Activated CD4-positive, alpha-beta T cell treated with anti-CD3 and anti-CD28 coated beads, Interleukin-2, amount 10 ng/mL, durations not matched to agents 24 days and 14 days (primary cell): ENCODE measurements at regions of chr6 and their contacts with region 1.

Region 1: GRCh38 chr6:16761471-16762267 is 409 bp upstream of the ATXN1 start:
- DNase-seq: peak; percentile 95
- H3K4me3 Mint-ChIP-seq: peak overlapping the region; percentile 99
- H3K27ac Mint-ChIP-seq: peak overlapping the region; percentile 100
- H3K4me1 Mint-ChIP-seq: peaks cover 56% of the 10 kb centered on the region
- H3K27me3 Mint-ChIP-seq: no peaks in the 10 kb centered on the region

Region 2: GRCh38 chr6:16319813-16320532 is 441.7 kb before region 1 on chr6:
- intact Hi-C with region 1: loop called (anchors 2 kb)
- DNase-seq: peak; percentile 90
- H3K4me3 Mint-ChIP-seq: peak overlapping the region; percentile 73
- H3K27ac Mint-ChIP-seq: peak overlapping the region; percentile 84
- H3K4me1 Mint-ChIP-seq: peaks cover 66% of the 10 kb centered on the region
- H3K27me3 Mint-ChIP-seq: no peaks in the 10 kb centered on the region

Region 3: DNA sequence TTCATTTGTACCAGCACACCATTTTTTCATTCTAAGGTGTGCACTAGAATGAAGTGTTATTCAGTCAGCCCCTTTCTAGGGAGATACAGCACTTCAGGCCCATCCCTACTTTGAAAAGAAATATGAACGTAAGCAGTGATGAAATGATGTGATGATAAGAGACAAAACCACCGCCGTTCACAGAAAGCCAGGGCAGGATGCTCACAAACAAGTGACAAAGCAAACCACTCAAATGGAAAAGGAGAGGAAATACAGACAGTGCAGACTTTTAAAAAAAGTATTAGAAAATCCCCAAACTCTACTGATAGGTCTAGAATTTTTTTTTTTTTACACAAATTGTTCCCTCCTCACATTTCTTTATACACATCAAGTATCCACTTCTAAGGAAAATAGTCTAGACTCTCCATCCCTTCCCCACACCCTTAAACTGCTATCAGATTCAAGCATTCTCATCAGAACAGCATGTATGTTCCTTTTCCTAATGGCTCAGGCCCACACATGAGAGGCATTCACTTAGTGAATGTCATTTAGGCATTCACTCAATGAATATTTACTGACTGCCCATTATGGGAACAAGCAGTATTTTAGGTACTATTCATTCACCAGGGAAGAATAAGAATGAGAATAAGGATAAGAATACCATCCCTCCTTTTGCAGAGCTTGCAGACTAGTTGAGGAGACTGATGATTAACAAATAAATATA is 279.8 kb before region 1 on chr6:
- intact Hi-C with region 1: loop called (anchors 1 kb)
- DNase-seq: peak; percentile 92
- H3K4me3 Mint-ChIP-seq: peak overlapping the region; percentile 54
- H3K27ac Mint-ChIP-seq: peak overlapping the region; percentile 99
- H3K4me1 Mint-ChIP-seq: peaks cover 82% of the 10 kb centered on the region
- H3K27me3 Mint-ChIP-seq: no peaks in the 10 kb centered on the region

Region 4: DNA sequence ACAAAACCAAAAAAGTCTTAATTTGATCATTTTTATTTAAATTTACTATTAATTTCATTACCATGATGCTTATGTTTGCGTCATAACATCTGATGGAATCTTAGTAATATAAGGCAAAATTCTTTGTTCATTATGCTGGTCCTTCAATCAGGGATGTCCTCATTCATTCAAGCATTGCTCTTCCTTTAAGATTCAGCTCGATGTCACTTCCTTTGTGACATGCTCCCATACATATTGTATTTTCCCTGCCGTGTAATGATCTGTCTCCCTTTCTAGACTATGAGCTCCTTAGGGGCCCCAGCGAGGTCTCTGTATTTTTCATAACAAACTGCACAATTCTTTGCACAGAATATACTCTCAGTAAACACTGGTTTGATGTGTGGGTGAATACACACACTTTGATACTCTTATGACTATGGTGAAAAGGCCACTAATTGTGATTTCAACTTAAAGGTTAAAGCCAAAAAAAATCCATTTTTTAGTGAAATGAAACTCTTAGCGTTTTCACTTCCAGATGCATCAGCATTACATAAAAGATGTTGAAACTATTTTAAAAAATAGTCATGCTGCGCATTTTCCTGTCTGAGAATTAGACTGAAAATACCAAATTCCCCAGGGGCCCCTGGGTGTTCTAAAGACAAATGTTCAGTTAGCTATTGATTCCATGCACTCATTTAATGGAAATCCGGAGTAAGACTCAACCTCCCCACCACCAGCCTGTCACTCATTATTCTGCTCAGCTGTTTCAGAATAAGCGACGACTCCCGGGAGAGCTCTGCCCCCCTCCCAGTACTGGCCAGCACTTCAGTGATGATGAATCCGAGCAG is 170.1 kb before region 1 on chr6:
- intact Hi-C with region 1: loop called (anchors 1 kb)
- DNase-seq: no peak
- H3K4me3 Mint-ChIP-seq: peak overlapping the region; percentile 16
- H3K27ac Mint-ChIP-seq: peak overlapping the region; percentile 87
- H3K4me1 Mint-ChIP-seq: peaks cover 24% of the 10 kb centered on the region
- H3K27me3 Mint-ChIP-seq: no peaks in the 10 kb centered on the region

Region 5: DNA sequence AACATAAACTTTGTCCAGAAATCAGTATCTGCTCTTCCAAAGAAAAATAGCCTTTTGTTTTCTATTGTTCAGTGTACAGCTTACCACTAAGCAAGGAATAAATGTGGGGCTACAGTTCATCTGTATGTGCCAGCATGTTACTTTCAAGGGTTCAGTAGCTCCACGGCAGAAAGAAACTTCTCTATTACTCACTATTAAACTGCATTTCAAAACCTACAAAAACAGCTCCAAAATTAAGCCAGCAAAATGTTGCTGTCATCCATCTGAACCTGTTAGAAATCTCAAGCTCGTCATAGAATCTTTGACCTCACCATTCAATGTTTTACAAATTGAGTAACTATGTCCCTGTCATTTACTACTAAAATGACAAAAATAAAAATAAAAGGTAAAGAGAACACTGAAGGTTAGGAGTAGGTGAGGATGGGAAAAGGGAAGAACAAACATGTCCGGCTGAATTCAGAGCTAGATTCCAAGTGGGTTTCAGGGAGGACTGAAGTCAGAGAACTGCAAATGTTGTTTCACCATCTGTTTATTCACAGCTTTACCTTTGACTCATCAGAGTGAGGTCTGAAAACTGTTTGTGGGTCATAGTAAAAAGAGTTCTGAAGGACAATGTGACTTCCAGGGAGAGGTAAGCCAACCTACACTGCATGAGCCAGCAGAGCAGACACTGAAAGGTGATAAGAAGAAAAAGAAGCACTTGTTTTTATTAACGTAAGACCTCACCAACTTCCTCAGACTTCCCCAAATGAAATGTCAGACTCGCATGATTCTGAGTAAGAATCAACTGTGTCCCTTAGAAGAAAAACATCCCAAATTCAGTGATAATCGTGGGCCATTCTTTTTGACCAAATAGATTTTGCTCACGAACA is 62.4 kb before region 1 on chr6:
- intact Hi-C with region 1: loop called (anchors 2 kb)
- DNase-seq: peak; percentile 71
- H3K4me3 Mint-ChIP-seq: peak overlapping the region; percentile 71
- H3K27ac Mint-ChIP-seq: peak overlapping the region; percentile 95
- H3K4me1 Mint-ChIP-seq: peaks cover 68% of the 10 kb centered on the region
- H3K27me3 Mint-ChIP-seq: no peaks in the 10 kb centered on the region

Region 6: DNA sequence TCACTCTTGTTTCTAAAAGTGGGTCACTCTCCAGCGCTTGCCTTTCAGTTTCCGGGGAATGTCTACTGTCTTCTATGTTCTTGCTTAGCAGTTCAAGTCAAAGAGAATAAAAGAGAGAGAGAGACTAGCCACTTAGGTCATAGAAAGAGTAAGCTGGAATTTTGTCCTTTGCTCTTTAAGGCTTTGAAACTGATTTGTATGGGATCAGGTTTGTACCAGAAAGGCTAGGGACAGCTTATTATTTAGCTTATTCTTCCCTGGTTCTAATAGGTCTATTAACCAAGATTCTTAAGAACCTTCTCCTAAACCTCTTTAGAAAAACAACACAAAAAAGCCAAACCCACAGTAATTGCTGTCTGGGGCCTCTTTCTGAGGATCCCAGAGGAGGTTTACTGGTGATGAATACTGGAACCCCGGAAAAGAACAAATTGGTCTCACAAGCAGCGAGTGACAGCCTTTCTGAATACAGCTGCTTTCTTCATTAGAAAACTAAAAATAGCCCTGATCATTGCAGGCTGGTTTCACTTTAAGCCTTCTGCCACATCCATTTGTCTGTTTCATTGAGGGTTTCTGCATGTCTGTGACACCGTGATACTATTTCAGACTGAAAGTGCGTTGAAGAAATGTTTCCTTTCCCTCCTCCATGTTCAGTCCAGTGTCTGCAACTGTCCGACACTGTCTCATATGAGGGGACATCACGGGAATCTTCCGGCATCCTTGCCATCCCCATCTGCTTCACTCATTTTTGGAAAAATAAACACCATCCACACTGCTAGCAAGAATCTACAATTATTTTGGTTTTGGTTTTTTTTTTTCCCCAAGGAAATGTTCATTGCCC is 74.7 kb after region 1 on chr6:
- intact Hi-C with region 1: loop called (anchors 5 kb)
- DNase-seq: peak; percentile 66
- H3K4me3 Mint-ChIP-seq: peak overlapping the region; percentile 61
- H3K27ac Mint-ChIP-seq: peak overlapping the region; percentile 71
- H3K4me1 Mint-ChIP-seq: peaks cover 30% of the 10 kb centered on the region
- H3K27me3 Mint-ChIP-seq: peaks cover 10% of the 10 kb centered on the region